ENCODE measurements at regions of chr20 and their contacts with region 1.

Region 1: GRCh38 chr20:31723319-31724078 is 831 bp upstream of the BCL2L1 start:
- DNase-seq: peak; percentile 99
- ATAC-seq: peak; percentile 92
- H3K4me3 Mint-ChIP-seq: peak overlapping the region; percentile 90
- H3K27ac Mint-ChIP-seq: peak overlapping the region; percentile 94
- H3K4me1 Mint-ChIP-seq: peaks cover 31% of the 10 kb centered on the region
- H3K27me3 Mint-ChIP-seq: no peaks in the 10 kb centered on the region

Region 2: DNA sequence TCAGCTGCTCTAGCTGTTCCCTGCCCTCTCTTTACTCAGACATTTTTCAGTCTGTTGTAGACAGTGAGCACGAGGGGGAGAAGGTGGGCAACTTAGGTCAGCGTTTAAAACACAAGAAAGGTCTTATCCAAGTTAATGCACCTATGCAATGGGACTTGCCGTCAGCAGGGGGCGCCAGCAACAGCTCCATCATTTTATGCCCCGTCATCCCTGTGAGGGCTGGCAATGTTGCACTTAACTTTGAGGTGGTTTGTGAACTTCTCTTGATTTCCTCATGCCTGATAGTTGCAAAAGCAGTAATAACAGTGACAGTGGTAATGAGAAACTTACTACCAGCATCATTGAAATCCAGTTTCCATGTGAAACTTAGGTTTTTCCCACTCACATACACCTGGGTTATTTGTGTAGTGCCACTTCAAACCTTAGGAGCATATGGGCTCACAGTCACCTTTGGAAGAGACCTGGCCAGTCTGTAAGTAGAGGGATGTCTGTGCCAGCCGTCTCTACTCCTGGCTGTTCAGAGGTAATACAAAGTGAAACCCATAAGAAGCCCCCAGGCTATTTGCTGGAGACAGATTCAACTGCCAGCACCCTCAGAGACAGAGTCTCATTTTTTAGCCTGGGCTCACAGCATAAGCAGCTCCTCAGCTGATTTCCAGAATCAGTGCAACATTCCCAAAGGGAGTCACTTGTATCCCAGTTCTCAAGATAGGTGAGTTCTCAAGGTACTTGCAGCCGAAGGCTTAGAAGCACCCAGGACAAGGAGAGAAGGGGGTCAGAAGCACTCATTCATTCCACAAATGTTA is 163.2 kb before region 1 on chr20:
- CTCF ChIA-PET with region 1: interaction called, 38 read pairs
- POLR2A ChIA-PET with region 1: interaction called, 4 read pairs
- DNase-seq: peak; percentile 85
- ATAC-seq: peak; percentile 71
- H3K4me3 Mint-ChIP-seq: no peak overlapping the region
- H3K27ac Mint-ChIP-seq: peak overlapping the region; percentile 78
- H3K4me1 Mint-ChIP-seq: peaks cover 24% of the 10 kb centered on the region
- H3K27me3 Mint-ChIP-seq: no peaks in the 10 kb centered on the region

Region 3: DNA sequence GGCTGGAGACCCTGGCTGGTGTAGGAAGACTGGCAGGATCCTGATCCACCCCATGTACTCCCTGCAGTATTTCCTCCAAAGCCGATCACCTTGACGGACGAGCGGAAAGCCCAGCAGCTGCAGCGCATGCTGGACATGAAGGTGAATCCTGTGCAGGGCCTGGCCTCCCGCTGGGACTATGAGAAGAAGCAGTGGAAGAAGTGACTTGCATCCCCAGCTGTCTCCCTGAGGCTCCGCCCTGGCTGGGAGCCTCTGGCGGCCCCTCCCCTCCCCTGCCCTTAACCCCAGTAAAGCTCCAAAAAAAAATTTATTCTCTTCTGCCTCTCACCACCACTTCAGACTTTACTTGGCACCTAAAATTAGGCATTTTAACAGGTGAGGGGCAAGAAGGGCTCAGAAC is 78.8 kb before region 1 on chr20:
- CTCF ChIA-PET with region 1: interaction called, 32 read pairs
- POLR2A ChIA-PET with region 1: interaction called, 7 read pairs
- DNase-seq: no peak
- ATAC-seq: no peak
- H3K4me3 Mint-ChIP-seq: no peak overlapping the region
- H3K27ac Mint-ChIP-seq: no peak overlapping the region
- H3K4me1 Mint-ChIP-seq: peaks cover 43% of the 10 kb centered on the region
- H3K27me3 Mint-ChIP-seq: peaks cover 48% of the 10 kb centered on the region

Region 4: GRCh38 chr20:31674895-31675827 is 48.3 kb before region 1 on chr20:
- CTCF ChIA-PET with region 1: interaction called, 186 read pairs
- POLR2A ChIA-PET with region 1: interaction called, 193 read pairs
- DNase-seq: peak; percentile 84
- ATAC-seq: peak; percentile 63
- H3K4me3 Mint-ChIP-seq: peak overlapping the region; percentile 89
- H3K27ac Mint-ChIP-seq: peak overlapping the region; percentile 98
- H3K4me1 Mint-ChIP-seq: peaks cover 95% of the 10 kb centered on the region
- H3K27me3 Mint-ChIP-seq: no peaks in the 10 kb centered on the region

Region 5: DNA sequence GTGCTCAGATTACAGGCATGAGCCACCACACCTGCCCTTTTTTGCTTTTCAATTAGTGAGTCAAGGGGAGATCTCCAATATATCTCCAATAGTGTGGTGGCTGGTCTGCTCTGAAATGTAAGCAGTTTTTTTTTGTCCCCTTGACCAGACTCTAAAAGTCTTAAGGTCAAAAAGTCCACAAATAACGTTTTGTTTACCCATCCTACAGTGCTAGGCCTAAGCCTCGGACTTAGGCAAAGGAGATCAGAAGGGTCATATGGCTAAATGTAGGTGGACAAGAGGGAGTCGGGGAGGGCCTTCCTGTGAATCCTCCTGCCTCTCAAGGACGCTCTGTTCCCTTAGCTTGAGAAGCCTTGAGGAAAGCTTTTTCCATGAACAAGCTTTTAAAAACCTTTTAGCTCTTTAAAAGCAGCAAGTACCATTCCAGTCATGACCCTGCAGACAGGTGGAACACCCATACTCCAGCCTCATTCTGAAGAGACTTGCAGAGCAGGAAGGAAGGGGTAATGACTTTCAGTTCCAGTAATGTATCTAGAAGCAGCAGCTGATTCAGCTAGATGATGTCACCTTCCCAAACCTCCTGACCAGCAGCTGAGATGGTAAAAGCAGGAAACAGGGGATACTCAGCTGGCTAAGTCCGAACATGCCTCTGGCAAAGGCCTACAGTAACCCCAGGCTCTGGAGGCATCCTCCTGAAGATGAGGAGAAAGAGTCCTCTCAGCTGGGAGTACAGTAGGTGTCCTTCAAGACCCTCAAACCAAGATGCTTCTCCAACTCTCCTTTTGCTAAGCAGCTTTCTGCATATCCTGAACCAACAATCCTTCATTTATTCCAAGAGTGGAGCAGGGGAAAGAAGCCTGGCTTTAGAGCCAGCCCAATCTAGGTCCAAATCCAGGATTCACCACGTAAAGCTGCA is 24.4 kb before region 1 on chr20:
- CTCF ChIA-PET with region 1: interaction called, 54 read pairs
- POLR2A ChIA-PET with region 1: interaction called, 44 read pairs
- DNase-seq: peak; percentile 45
- ATAC-seq: peak; percentile 76
- H3K4me3 Mint-ChIP-seq: peak overlapping the region; percentile 27
- H3K27ac Mint-ChIP-seq: peak overlapping the region; percentile 84
- H3K4me1 Mint-ChIP-seq: peaks cover 65% of the 10 kb centered on the region
- H3K27me3 Mint-ChIP-seq: no peaks in the 10 kb centered on the region

Region 6: GRCh38 chr20:31738729-31739561 is 15.4 kb after region 1 on chr20 and contains the start of gene TPX2:
- CTCF ChIA-PET with region 1: interaction called, 35 read pairs
- POLR2A ChIA-PET with region 1: interaction called, 9 read pairs
- DNase-seq: peak; percentile 87
- ATAC-seq: peak; percentile 94
- H3K4me3 Mint-ChIP-seq: no peak within 1 kb of the TSS
- H3K27ac Mint-ChIP-seq: no peak within 1 kb of the TSS
- H3K4me1 Mint-ChIP-seq: peaks cover 3% of the 10 kb centered on the region
- H3K27me3 Mint-ChIP-seq: no peaks in the 10 kb centered on the region
- total RNA-seq, gene TPX2: 172 to 174 TPM

Region 7: DNA sequence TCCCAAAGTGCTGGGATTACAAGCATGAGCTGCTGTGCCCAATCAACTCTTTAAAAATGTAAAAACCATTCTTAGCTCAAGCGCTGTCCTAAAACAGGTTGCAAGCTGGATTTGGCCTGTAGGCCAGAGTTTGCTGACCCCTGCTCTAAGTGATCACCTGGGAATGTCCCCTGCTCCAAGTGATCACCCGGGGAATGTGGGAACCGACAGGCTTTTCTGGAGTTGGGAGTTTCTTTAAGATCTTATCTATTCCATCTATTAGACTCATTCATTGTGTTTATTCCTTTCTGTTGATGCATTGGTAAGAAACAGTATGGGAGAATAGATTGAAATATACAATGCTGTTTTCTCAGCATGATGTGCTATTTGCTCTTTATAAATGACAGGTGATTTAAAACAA is 71.9 kb after region 1 on chr20:
- CTCF ChIA-PET with region 1: no interaction called
- POLR2A ChIA-PET with region 1: no interaction called
- DNase-seq: no peak
- ATAC-seq: no peak
- H3K4me3 Mint-ChIP-seq: no peak overlapping the region
- H3K27ac Mint-ChIP-seq: no peak overlapping the region
- H3K4me1 Mint-ChIP-seq: no peaks in the 10 kb centered on the region
- H3K27me3 Mint-ChIP-seq: no peaks in the 10 kb centered on the region

Region 8: DNA sequence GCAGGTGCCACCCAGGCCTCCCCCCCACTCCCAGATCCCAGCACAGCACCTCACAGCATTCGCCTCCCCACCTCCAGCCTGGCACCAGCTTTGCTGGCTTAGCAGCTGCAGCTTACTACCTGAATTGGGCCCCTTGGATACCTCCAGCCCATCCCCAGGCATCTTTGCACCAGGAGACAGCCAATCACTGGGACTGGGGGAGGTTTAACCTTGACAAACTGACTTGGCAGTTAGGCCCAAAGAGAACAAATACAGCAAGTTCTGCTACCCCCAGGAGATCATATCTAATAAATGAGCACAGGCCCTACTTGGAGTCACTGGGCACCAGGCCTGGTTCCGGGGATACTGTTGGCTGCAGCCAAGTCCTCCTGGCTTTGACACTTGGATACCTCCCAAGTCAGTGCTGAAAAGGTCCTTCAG is 219.6 kb after region 1 on chr20:
- CTCF ChIA-PET with region 1: no interaction called
- POLR2A ChIA-PET with region 1: no interaction called
- DNase-seq: no peak
- ATAC-seq: no peak
- H3K4me3 Mint-ChIP-seq: no peak overlapping the region
- H3K27ac Mint-ChIP-seq: no peak overlapping the region
- H3K4me1 Mint-ChIP-seq: no peaks in the 10 kb centered on the region
- H3K27me3 Mint-ChIP-seq: no peaks in the 10 kb centered on the region

Measured in activated CD8-positive, alpha-beta T cell treated with anti-CD3 and anti-CD28 coated beads, Interleukin-2, amount 10 ng/mL, durations not matched to agents 7 days and 5 days (primary cell).